ENCODE measurements at regions of chr18 and their contacts with region 1.

Region 1: GRCh38 chr18:74495581-74496507 is at the start of gene CNDP2:
- DNase-seq: peak; percentile 99
- H3K4me3 ChIP-seq: peak within 1 kb of the TSS; percentile 52 to 89 (median 74)
- H3K27ac ChIP-seq: peak within 1 kb of the TSS; percentile 59
- H3K4me1 ChIP-seq: peaks cover 11% of the 10 kb centered on the region
- H3K27me3 ChIP-seq: peaks cover 12 to 20% of the 10 kb centered on the region in 2 experiments
- CTCF ChIP-seq: no peak
- POLR2A ChIP-seq: peak; percentile 45
- total RNA-seq, gene CNDP2: 121 and 123 TPM in 2 replicates

Region 2: GRCh38 chr18:74196220-74197119 is 299.4 kb before region 1 on chr18:
- CTCF ChIA-PET with region 1: interaction called, 11 read pairs
- POLR2A ChIA-PET with region 1: no interaction called
- dilution Hi-C with region 1: no loop called
- intact Hi-C with region 1: loop called (anchors 1 kb)
- DNase-seq: peak; percentile 78
- H3K4me3 ChIP-seq: peak overlapping the region in 2 of 3 experiments; percentile 14 to 48
- H3K27ac ChIP-seq: no peak overlapping the region
- H3K4me1 ChIP-seq: no peaks in the 10 kb centered on the region
- H3K27me3 ChIP-seq: peaks cover 0 to 3% of the 10 kb centered on the region in 2 experiments
- CTCF ChIP-seq: peak; percentile 62 to 86
- POLR2A ChIP-seq: no peak

Region 3: GRCh38 chr18:74342416-74343043 is 153.3 kb before region 1 on chr18:
- CTCF ChIA-PET with region 1: interaction called, 13 read pairs
- POLR2A ChIA-PET with region 1: no interaction called
- dilution Hi-C with region 1: no loop called
- intact Hi-C with region 1: no loop called
- DNase-seq: peak; percentile 67
- H3K4me3 ChIP-seq: no peak overlapping the region
- H3K27ac ChIP-seq: no peak overlapping the region
- H3K4me1 ChIP-seq: no peaks in the 10 kb centered on the region
- H3K27me3 ChIP-seq: peaks cover 0 to 7% of the 10 kb centered on the region in 2 experiments
- CTCF ChIP-seq: peak; percentile 24 to 25
- POLR2A ChIP-seq: no peak

Region 4: GRCh38 chr18:74396171-74397169 is 99.4 kb before region 1 on chr18:
- CTCF ChIA-PET with region 1: no interaction called
- POLR2A ChIA-PET with region 1: no interaction called
- dilution Hi-C with region 1: no loop called
- intact Hi-C with region 1: no loop called
- DNase-seq: no peak
- H3K4me3 ChIP-seq: no peak overlapping the region
- H3K27ac ChIP-seq: no peak overlapping the region
- H3K4me1 ChIP-seq: no peaks in the 10 kb centered on the region
- H3K27me3 ChIP-seq: no peaks in the 10 kb centered on the region
- CTCF ChIP-seq: no peak
- POLR2A ChIP-seq: no peak

Region 5: GRCh38 chr18:74468547-74469061 is 27.2 kb before region 1 on chr18:
- CTCF ChIA-PET with region 1: interaction called, 4 read pairs
- POLR2A ChIA-PET with region 1: no interaction called
- dilution Hi-C with region 1: no loop called
- intact Hi-C with region 1: loop called (anchors 1 kb)
- DNase-seq: peak; percentile 65
- H3K4me3 ChIP-seq: no peak overlapping the region
- H3K27ac ChIP-seq: no peak overlapping the region
- H3K4me1 ChIP-seq: peaks cover 5% of the 10 kb centered on the region
- H3K27me3 ChIP-seq: peaks cover 0 to 12% of the 10 kb centered on the region in 2 experiments
- CTCF ChIP-seq: no peak
- POLR2A ChIP-seq: no peak

Region 6: DNA sequence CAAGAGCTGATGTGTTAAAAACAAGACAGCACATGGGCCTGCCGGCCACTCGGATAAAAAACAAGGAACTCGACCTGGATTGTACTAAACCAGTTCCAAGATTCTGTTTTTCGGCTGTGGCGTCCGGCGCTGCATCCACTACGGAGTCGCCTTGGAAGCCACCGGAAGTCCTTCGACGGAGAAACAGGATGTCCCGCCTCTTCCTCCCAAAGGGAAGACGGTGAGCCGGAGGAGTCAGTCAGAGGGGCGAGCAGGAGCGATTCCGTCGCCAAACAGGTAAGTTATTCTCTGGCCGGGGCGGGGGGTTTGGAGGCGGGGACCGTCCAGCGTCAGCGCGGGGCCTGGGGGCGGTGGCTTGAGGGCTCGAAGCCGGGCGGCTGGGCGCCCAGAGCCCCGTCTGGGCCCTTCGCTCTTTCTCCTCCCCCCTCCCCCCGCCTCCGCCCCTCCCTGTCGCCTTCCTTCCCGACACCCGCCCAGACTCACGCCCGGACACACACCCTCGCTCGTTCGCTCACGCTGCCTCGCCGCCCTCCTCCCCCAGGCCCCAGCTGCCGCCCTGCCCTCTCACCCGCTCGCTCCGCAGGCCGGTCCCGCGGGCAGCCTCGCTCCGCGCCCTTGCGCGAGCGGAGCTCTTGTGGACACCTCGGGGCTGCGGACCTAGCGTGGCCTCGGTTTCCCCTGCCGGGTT is 102.0 kb after region 1 on chr18 and contains the start of gene ZNF407:
- CTCF ChIA-PET with region 1: no interaction called
- POLR2A ChIA-PET with region 1: no interaction called
- dilution Hi-C with region 1: no loop called
- intact Hi-C with region 1: loop called (anchors 1 kb)
- DNase-seq: peak; percentile 91
- H3K4me3 ChIP-seq: peak within 1 kb of the TSS; percentile 88 to 98 (median 97)
- H3K27ac ChIP-seq: peak within 1 kb of the TSS; percentile 99
- H3K4me1 ChIP-seq: peaks cover 15% of the 10 kb centered on the region
- H3K27me3 ChIP-seq: no peaks in the 10 kb centered on the region
- CTCF ChIP-seq: no peak
- POLR2A ChIP-seq: peak; percentile 6
- total RNA-seq, gene ZNF407: 17.3 and 20.1 TPM in 2 replicates

Region 7: GRCh38 chr18:76492669-76493212 is 1996.9 kb after region 1 on chr18:
- CTCF ChIA-PET with region 1: no interaction called
- POLR2A ChIA-PET with region 1: no interaction called
- dilution Hi-C with region 1: no loop called
- intact Hi-C with region 1: loop called (anchors 5 kb)
- DNase-seq: peak; percentile 98
- H3K4me3 ChIP-seq: peak overlapping the region; percentile 80 to 97 (median 97)
- H3K27ac ChIP-seq: peak overlapping the region; percentile 60
- H3K4me1 ChIP-seq: peaks cover 25% of the 10 kb centered on the region
- H3K27me3 ChIP-seq: peaks cover 9 to 10% of the 10 kb centered on the region in 2 experiments
- CTCF ChIP-seq: no peak
- POLR2A ChIP-seq: peak; percentile 20

Measured in endothelial cell of umbilical vein (primary cell).